Mammary epithelial cell (primary cell): ENCODE measurements at regions of chr11 and their contacts with region 1.

Region 1: GRCh38 chr11:129143335-129143734 is 48.8 kb downstream of the ARHGAP32 start:
- DNase-seq: peak; percentile 100
- H3K4me3 ChIP-seq: peak overlapping the region in 2 of 3 experiments; percentile 20 to 50
- H3K27ac ChIP-seq: peak overlapping the region; percentile 98
- H3K4me1 ChIP-seq: peaks cover 38% of the 10 kb centered on the region
- H3K27me3 ChIP-seq: no peaks in the 10 kb centered on the region
- CTCF ChIP-seq: no peak

Region 2: GRCh38 chr11:129223701-129224149 is 80.4 kb after region 1 on chr11:
- CTCF ChIA-PET with region 1: no interaction called
- dilution Hi-C with region 1: no loop called
- in situ Hi-C with region 1: no loop called
- intact Hi-C with region 1: loop called (anchors 2 kb)
- DNase-seq: peak; percentile 62
- H3K4me3 ChIP-seq: no peak overlapping the region
- H3K27ac ChIP-seq: peak overlapping the region; percentile 13
- H3K4me1 ChIP-seq: peaks cover 17% of the 10 kb centered on the region
- H3K27me3 ChIP-seq: no peaks in the 10 kb centered on the region
- CTCF ChIP-seq: no peak